ENCODE measurements at regions of chr9 and their contacts with region 1.

Region 1: DNA sequence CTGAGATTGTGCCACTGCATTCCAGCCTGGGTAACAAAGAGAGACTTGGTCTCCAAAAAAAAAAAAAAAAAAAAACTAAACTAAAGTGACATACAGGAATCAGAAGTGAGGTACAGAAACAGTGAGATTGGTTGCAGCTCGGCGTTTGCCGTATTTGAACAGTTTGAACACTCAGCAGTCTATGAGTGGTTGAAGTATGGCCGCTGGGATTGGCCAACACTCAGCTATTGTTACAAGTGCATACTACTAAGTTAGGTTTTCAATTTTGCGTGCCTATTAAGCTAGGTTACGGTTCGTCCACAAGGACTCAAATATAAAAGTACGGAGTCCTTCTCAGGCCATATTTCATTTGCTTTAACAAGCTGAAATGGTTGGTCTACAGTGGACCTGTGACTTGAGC is 3.3 kb upstream of the TSC1 start:
- DNase-seq: no peak
- H3K4me3 ChIP-seq: no peak overlapping the region
- H3K4me3 Mint-ChIP-seq: no peak overlapping the region
- H3K27ac Mint-ChIP-seq: no peak overlapping the region
- H3K4me1 ChIP-seq: peaks cover 13% of the 10 kb centered on the region; the same call in 1 of the 2 replicates
- H3K4me1 Mint-ChIP-seq: peaks cover 6% of the 10 kb centered on the region
- H3K27me3 ChIP-seq: no peaks in the 10 kb centered on the region
- H3K27me3 Mint-ChIP-seq: no peaks in the 10 kb centered on the region
- CTCF ChIP-seq: no peak

Region 2: GRCh38 chr9:132548766-132549640 is 398.8 kb before region 1 on chr9:
- CTCF ChIA-PET with region 1: no interaction called
- POLR2A ChIA-PET with region 1: no interaction called
- intact Hi-C with region 1: no loop called
- DNase-seq: no peak
- H3K4me3 ChIP-seq: no peak overlapping the region
- H3K4me3 Mint-ChIP-seq: no peak overlapping the region
- H3K27ac Mint-ChIP-seq: no peak overlapping the region
- H3K4me1 ChIP-seq: no peaks in the 10 kb centered on the region
- H3K4me1 Mint-ChIP-seq: no peaks in the 10 kb centered on the region
- H3K27me3 ChIP-seq: no peaks in the 10 kb centered on the region
- H3K27me3 Mint-ChIP-seq: peaks cover 3% of the 10 kb centered on the region
- CTCF ChIP-seq: no peak

Region 3: GRCh38 chr9:132842124-132843044 is 105.4 kb before region 1 on chr9:
- CTCF ChIA-PET with region 1: interaction called, 12 read pairs
- POLR2A ChIA-PET with region 1: no interaction called
- intact Hi-C with region 1: no loop called
- DNase-seq: peak in 1 of 2 experiments; percentile 23
- H3K4me3 ChIP-seq: no peak overlapping the region
- H3K4me3 Mint-ChIP-seq: no peak overlapping the region
- H3K27ac Mint-ChIP-seq: no peak overlapping the region
- H3K4me1 ChIP-seq: no peaks in the 10 kb centered on the region
- H3K4me1 Mint-ChIP-seq: no peaks in the 10 kb centered on the region
- H3K27me3 ChIP-seq: no peaks in the 10 kb centered on the region
- H3K27me3 Mint-ChIP-seq: no peaks in the 10 kb centered on the region
- CTCF ChIP-seq: no peak

Measured in Caco-2 (cell line).